ENCODE measurements at regions of chr12 and their contacts with region 1.

Region 1: DNA sequence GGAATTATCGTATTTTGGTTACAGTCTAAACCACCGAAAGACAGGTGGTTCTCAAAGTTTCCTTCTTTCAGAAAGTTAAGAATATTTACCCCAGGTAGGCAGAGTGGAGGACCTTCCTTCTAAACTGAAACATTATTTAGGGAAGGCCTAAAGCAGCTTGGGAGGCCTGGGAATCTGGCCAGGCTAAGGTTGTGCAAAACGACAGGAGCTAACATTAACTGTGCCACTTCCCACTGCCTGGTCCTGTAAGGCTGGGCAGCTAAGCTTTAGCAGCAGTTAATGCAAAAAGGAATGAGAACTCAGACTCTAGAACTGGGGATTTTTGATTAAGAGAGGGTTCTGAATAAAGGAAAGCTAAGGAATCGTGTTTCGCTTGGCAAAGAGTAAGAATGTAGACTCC is 82.6 kb downstream of the SLCO1A2 start:
- DNase-seq: no peak
- ATAC-seq: no peak
- H3K4me3 ChIP-seq: no peak overlapping the region
- H3K27ac ChIP-seq: no peak overlapping the region
- H3K4me1 ChIP-seq: no peaks in the 10 kb centered on the region
- H3K27me3 ChIP-seq: no peaks in the 10 kb centered on the region
- CTCF ChIP-seq: no peak

Region 2: GRCh38 chr12:21308785-21309184 is 56.7 kb after region 1 on chr12:
- CTCF ChIA-PET with region 1: no interaction called
- POLR2A ChIA-PET with region 1: no interaction called
- intact Hi-C with region 1: no loop called
- DNase-seq: no peak
- ATAC-seq: no peak
- H3K4me3 ChIP-seq: no peak overlapping the region
- H3K27ac ChIP-seq: no peak overlapping the region
- H3K4me1 ChIP-seq: no peaks in the 10 kb centered on the region
- H3K27me3 ChIP-seq: no peaks in the 10 kb centered on the region; the same call in 1 of the 2 replicates
- CTCF ChIP-seq: no peak

Region 3: GRCh38 chr12:21456291-21456780 is 204.3 kb after region 1 on chr12:
- CTCF ChIA-PET with region 1: no interaction called
- POLR2A ChIA-PET with region 1: no interaction called
- intact Hi-C with region 1: loop called (anchors 10 kb)
- DNase-seq: peak; percentile 10
- ATAC-seq: no peak
- H3K4me3 ChIP-seq: no peak overlapping the region
- H3K27ac ChIP-seq: no peak overlapping the region
- H3K4me1 ChIP-seq: no peaks in the 10 kb centered on the region
- H3K27me3 ChIP-seq: no peaks in the 10 kb centered on the region
- CTCF ChIP-seq: no peak

Region 4: GRCh38 chr12:21566223-21566906 is 314.3 kb after region 1 on chr12:
- CTCF ChIA-PET with region 1: no interaction called
- POLR2A ChIA-PET with region 1: no interaction called
- intact Hi-C with region 1: no loop called
- DNase-seq: no peak
- ATAC-seq: no peak
- H3K4me3 ChIP-seq: no peak overlapping the region
- H3K27ac ChIP-seq: no peak overlapping the region
- H3K4me1 ChIP-seq: no peaks in the 10 kb centered on the region
- H3K27me3 ChIP-seq: no peaks in the 10 kb centered on the region
- CTCF ChIP-seq: no peak

Measured in PC-3 (cell line).